Activated CD4-positive, alpha-beta T cell treated with anti-CD3 and anti-CD28 coated beads for 36 hours (primary cell): ENCODE measurements at regions of chr16 and their contacts with region 1.

Region 1: DNA sequence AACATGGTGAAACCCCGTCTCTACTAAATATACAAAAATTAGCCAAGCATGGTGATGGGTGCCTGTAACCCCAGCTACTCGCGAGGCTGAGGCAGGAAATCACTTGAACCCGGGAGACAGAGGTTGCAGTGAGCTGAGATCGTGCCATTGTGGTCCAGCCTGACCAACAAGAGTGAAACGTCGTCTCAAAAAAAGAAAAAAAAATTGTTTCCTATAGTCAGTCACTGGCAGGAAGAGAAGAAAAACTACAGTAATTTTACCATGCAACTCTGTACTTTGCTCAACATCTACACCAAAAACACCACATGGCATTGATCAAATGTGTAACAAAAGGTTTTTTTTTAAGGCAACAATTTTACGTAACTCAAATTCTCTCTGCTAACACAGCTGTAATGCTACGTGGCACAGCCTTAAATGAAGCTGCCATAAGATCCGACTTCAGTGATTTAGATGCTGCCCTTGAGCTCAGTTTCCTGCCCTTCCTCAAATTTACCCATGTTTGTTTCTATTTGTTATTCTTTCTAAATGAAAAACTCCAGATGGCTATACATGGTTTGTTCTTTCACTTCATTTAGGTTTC is 40.2 kb downstream of the CNOT1 start:
- DNase-seq: no peak
- ATAC-seq: no peak
- H3K4me3 Mint-ChIP-seq: no peak overlapping the region
- H3K27ac Mint-ChIP-seq: peak overlapping the region; percentile 24
- H3K4me1 Mint-ChIP-seq: peaks cover 18% of the 10 kb centered on the region
- H3K27me3 Mint-ChIP-seq: no peaks in the 10 kb centered on the region

Region 2: GRCh38 chr16:58614212-58614611 is 24.8 kb after region 1 on chr16:
- CTCF ChIA-PET with region 1: no interaction called
- POLR2A ChIA-PET with region 1: interaction called, 15 read pairs
- intact Hi-C with region 1: no loop called
- DNase-seq: no peak
- ATAC-seq: no peak
- H3K4me3 Mint-ChIP-seq: no peak overlapping the region
- H3K27ac Mint-ChIP-seq: no peak overlapping the region
- H3K4me1 Mint-ChIP-seq: peaks cover 9% of the 10 kb centered on the region
- H3K27me3 Mint-ChIP-seq: no peaks in the 10 kb centered on the region

Region 3: DNA sequence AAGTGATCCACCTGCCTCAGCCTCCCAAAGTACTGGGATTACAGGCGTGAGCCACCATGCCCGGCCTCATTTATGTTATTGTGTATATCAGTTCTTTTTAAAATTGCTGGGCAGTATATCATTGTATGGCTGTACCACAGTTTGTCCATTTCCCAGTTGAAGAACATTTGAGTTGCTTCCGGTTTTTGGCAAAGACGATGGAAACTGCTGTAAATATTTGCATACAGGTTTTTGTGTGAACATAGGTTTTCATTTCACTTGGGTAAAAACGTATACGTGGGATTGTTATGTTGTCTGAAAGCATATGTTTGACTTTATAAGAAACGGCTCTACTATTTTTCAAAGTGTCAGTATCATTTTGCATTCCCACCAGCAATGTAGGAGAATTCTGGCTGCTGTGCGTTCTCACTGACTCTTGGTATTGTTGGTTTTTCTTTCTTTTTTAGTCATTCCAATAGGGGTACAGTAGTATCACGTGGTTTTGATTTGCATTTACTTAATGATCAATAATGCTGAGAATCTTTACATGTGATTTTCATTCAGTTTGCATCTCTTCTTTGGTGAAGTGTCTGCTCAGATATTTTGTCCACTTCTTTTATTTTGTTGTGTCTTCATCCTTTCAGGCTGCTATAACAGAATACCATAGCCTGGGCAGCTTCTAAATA is 207.9 kb after region 1 on chr16:
- CTCF ChIA-PET with region 1: no interaction called
- POLR2A ChIA-PET with region 1: no interaction called
- intact Hi-C with region 1: no loop called
- DNase-seq: no peak
- ATAC-seq: no peak
- H3K4me3 Mint-ChIP-seq: no peak overlapping the region
- H3K27ac Mint-ChIP-seq: no peak overlapping the region
- H3K4me1 Mint-ChIP-seq: no peaks in the 10 kb centered on the region
- H3K27me3 Mint-ChIP-seq: peaks cover 4% of the 10 kb centered on the region